Transverse colon (tissue), 4 donors: ENCODE measurements at regions of chr1 and their contacts with region 1.

Region 1: GRCh38 chr1:8412183-8412831 is 94.4 kb downstream of the SLC45A1 start:
- DNase-seq: peak; percentile 47
- H3K4me3 ChIP-seq: no peak overlapping the region
- H3K27ac ChIP-seq: peak overlapping the region; percentile 91 to 99 (median 98)
- H3K4me1 ChIP-seq: peaks cover 66 to 99% (median 91%) of the 10 kb centered on the region in 4 donors
- H3K27me3 ChIP-seq: no peaks in the 10 kb centered on the region
- CTCF ChIP-seq: no peak
- EP300 ChIP-seq: peak; percentile 0
- POLR2A ChIP-seq: no peak

Region 2: GRCh38 chr1:8374812-8375211 is 37.5 kb before region 1 on chr1:
- in situ Hi-C with region 1: no loop called
- intact Hi-C with region 1: loop called (anchors 5 kb)
- DNase-seq: peak; percentile 49
- H3K4me3 ChIP-seq: no peak overlapping the region
- H3K27ac ChIP-seq: peak overlapping the region; percentile 62 to 89 (median 76)
- H3K4me1 ChIP-seq: peaks cover 46 to 90% (median 65%) of the 10 kb centered on the region in 4 donors
- H3K27me3 ChIP-seq: no peaks in the 10 kb centered on the region
- CTCF ChIP-seq: peak; percentile 37 to 59 (median 46)
- EP300 ChIP-seq: no peak
- POLR2A ChIP-seq: no peak

Region 3: DNA sequence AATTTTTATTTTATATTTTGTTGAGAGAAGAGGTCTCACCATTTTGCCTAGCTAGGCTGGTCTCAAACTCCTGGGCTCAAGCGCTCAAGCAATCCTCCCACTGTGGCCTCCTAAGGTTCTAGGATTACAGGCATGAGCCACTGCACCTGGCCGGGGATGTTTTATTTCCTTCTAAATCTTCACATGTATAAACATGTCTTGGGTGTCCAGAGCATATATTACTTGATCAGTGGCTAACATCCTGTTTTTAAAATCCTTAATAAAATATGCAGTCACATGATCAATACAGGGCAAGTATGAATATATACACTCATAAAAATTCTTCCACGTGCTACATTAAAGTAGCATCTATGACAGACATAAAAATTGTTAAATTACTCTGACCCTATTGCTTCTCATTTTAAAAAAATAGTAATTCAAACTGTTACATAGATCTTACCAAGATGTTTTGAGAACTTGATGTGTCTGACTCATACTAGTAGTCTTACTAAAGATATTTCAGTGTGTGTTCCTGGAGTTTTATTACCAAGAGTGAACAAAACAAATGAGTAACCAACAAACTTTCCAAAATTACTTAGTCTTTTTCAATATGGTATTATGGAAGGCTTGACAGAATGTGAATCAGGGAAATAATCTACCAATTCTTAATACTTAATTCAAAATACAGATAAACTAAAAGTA is 128.1 kb after region 1 on chr1:
- in situ Hi-C with region 1: no loop called
- intact Hi-C with region 1: no loop called
- DNase-seq: no peak
- H3K4me3 ChIP-seq: no peak overlapping the region
- H3K27ac ChIP-seq: peak overlapping the region; percentile 38 to 61 (median 52)
- H3K4me1 ChIP-seq: peaks cover 0 to 26% (median 3%) of the 10 kb centered on the region in 4 donors
- H3K27me3 ChIP-seq: no peaks in the 10 kb centered on the region
- CTCF ChIP-seq: no peak
- EP300 ChIP-seq: no peak
- POLR2A ChIP-seq: no peak